ENCODE measurements at regions of chr4 and their contacts with region 1.

Region 1: DNA sequence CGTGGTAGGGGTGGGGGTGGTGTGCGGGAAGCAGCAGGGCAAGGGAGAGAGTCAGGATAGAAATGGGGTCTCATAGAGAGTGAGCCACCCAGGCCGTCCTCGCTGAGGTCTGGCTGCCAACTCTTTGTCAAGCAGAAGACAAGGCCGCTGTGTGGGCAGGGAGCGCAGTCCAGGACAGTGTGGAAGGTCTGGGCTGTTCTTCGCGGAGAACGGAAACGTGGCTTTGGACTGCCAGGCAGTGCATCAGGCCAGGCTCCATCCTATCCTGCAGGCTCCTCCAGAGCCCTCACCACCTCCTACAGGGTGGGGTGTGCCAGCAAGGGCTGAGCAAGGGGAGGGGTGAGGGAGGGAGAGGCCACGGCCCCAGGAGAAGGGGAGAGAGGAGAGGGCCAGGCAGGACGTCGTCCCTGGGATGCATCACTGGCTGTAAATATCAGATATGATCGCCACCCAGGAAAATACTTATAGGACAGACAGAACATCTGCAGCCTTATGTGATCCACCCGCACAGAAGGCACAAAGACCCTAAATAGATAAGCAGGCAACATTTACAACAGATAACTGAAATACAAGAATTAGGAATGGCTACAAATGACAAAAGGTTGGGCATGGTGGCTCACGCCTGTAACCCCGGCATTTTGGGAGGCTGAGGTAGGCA is 85.3 kb downstream of the ABLIM2 start:
- DNase-seq: no peak
- H3K4me3 ChIP-seq: no peak overlapping the region
- H3K27ac ChIP-seq: no peak overlapping the region
- H3K4me1 ChIP-seq: peaks cover 0 to 17% (median 8%) of the 10 kb centered on the region in 4 experiments; a peak in 6 of 7 replicates
- H3K27me3 ChIP-seq: no peaks in the 10 kb centered on the region
- CTCF ChIP-seq: no peak
- EP300 ChIP-seq: no peak
- POLR2A ChIP-seq: no peak
- RAD21 ChIP-seq: no peak

Region 2: GRCh38 chr4:8061145-8061544 is 12.2 kb before region 1 on chr4:
- CTCF ChIA-PET with region 1: no interaction called
- POLR2A ChIA-PET with region 1: no interaction called
- DNase-seq: no peak
- H3K4me3 ChIP-seq: no peak overlapping the region
- H3K27ac ChIP-seq: no peak overlapping the region
- H3K4me1 ChIP-seq: peaks cover 0 to 6% (median 0%) of the 10 kb centered on the region in 4 experiments; a peak in 3 of 7 replicates
- H3K27me3 ChIP-seq: no peaks in the 10 kb centered on the region; a peak in 1 of 7 replicates
- CTCF ChIP-seq: no peak
- EP300 ChIP-seq: no peak
- POLR2A ChIP-seq: no peak
- RAD21 ChIP-seq: peak in 1 of 2 experiments; percentile 19; a peak in 1 of 4 replicates

Region 3: DNA sequence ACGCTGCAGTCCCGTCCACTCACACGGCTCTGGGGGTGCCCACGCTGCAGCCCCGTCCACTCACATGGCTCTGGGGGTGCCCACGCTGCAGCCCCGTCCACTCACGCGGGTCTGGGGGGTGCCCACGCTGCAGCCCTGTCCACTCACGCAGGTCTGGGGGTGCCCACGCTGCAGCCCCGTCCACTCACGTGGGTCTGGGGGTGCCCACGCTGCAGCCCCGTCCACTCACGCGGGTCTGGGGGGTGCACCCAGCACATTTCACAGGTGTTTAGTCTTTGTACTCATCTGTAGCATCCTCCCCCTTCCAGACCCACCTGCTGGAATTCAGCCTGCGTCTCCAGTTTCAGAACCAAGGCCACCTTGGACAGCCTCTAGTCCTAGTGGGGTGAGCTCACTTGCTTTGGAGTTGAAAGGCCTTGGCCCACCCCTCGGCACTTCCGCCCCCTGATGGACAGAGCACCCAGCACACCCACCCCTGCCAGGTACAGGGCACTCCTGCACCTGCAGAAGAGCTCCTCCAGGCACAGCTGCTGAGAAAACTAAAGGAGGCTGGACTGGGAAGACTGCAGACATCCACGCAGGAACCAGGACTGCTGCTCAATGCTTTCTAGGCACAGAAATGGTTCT is 12.3 kb after region 1 on chr4:
- CTCF ChIA-PET with region 1: interaction called, 34 read pairs
- POLR2A ChIA-PET with region 1: interaction called, 5 read pairs
- DNase-seq: no peak
- H3K4me3 ChIP-seq: no peak overlapping the region
- H3K27ac ChIP-seq: no peak overlapping the region
- H3K4me1 ChIP-seq: peaks cover 1 to 6% (median 4%) of the 10 kb centered on the region in 4 experiments; a peak in 6 of 7 replicates
- H3K27me3 ChIP-seq: no peaks in the 10 kb centered on the region
- CTCF ChIP-seq: peak in 2 of 3 experiments; percentile 47 to 62; a peak in 3 of 4 replicates
- EP300 ChIP-seq: no peak
- POLR2A ChIP-seq: no peak
- RAD21 ChIP-seq: peak; percentile 31 to 55

Region 4: GRCh38 chr4:8241895-8242696 is 168.8 kb after region 1 on chr4:
- CTCF ChIA-PET with region 1: no interaction called
- POLR2A ChIA-PET with region 1: no interaction called
- DNase-seq: peak; percentile 76 to 100
- H3K4me3 ChIP-seq: no peak overlapping the region
- H3K27ac ChIP-seq: no peak overlapping the region
- H3K4me1 ChIP-seq: peaks cover 0 to 8% (median 3%) of the 10 kb centered on the region in 4 experiments; a peak in 6 of 7 replicates
- H3K27me3 ChIP-seq: no peaks in the 10 kb centered on the region
- CTCF ChIP-seq: peak in 2 of 3 experiments; percentile 87 to 97; a peak in 3 of 4 replicates
- EP300 ChIP-seq: no peak
- POLR2A ChIP-seq: no peak
- RAD21 ChIP-seq: peak; percentile 94 to 96

Region 5: GRCh38 chr4:8440492-8441341 is 367.4 kb after region 1 on chr4 and contains the starts of genes ACOX3 and TRMT44:
- CTCF ChIA-PET with region 1: no interaction called
- POLR2A ChIA-PET with region 1: no interaction called
- DNase-seq: peak; percentile 57 to 100
- H3K4me3 ChIP-seq: peak within 1 kb of the TSS; percentile 71 to 92 (median 90)
- H3K27ac ChIP-seq: peak within 1 kb of the TSS; percentile 67
- H3K4me1 ChIP-seq: peaks cover 3 to 21% (median 4%) of the 10 kb centered on the region in 4 experiments; a peak in 6 of 7 replicates
- H3K27me3 ChIP-seq: no peaks in the 10 kb centered on the region
- CTCF ChIP-seq: no peak
- EP300 ChIP-seq: peak in 1 of 2 experiments; percentile 86; a peak in 1 of 3 replicates
- POLR2A ChIP-seq: peak; percentile 37 to 78
- RAD21 ChIP-seq: no peak; a peak in 1 of 4 replicates
- total RNA-seq, gene ACOX3: 9.9 and 10.2 TPM in 2 replicates
- total RNA-seq, gene TRMT44: 20.1 and 23.9 TPM in 2 replicates

Measured in H1 (cell line).